CD4-positive, alpha-beta memory T cell (primary cell): ENCODE measurements at regions of chr18 and their contacts with region 1.

Region 1: DNA sequence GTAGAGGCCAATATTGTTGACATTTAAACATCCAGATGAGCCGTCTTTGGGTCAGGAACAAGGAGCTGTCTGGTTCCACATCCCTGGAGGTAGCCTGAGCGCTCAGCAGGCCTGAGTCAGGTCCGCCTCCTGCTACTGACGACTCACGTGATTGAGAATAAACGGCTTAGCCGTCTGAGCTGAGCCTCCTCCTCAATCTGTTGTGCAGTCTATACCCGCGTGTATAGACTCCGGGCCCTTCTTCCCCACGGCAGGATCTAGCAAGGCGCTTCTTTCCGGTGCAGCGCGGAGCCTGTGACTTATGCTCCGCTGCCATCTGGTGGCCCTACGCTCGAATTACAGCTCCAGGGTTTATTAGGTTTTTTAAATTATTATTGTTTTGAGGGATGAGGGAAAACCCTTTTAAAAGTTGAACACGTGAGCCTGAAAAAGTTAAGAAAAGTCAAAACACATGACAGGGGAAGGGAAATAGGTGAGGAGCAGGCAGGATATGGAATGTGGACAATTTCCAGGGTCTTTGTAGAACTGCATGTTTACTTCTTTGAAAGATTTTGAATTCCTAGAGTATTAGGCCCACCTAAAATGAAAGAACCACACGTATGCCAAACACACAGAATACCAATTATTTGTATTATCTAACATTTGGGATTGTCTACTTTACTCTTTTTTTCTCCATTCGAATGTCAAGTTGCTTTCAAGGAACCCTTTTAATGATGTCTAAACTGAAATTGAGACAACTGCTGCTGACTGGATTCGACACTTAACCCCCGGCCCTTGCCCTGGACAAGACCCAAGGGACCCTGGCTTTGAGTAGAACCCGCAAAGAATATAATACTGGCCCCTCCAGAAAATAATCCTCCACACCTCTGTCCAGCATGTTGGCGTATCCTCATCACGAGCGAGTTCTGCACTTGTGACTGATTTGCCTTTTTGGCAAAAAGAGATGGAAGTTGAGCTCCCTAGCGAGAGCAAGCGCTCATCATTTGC is 112.4 kb upstream of the ZNF236 start:
- DNase-seq: peak; percentile 50 to 60 (median 57)
- H3K4me3 ChIP-seq: no peak overlapping the region
- H3K4me3 Mint-ChIP-seq: peak overlapping the region in 2 of 8 donors; percentile 16 to 26
- H3K27ac ChIP-seq: no peak overlapping the region
- H3K27ac Mint-ChIP-seq: peak overlapping the region in 2 of 7 donors; percentile 2 to 13
- H3K4me1 ChIP-seq: peaks cover 3% of the 10 kb centered on the region
- H3K4me1 Mint-ChIP-seq: peaks cover 0 to 6% (median 3%) of the 10 kb centered on the region in 4 donors
- H3K27me3 ChIP-seq: no peaks in the 10 kb centered on the region
- H3K27me3 Mint-ChIP-seq: peaks cover 1 to 2% of the 10 kb centered on the region in 2 donors

Region 2: DNA sequence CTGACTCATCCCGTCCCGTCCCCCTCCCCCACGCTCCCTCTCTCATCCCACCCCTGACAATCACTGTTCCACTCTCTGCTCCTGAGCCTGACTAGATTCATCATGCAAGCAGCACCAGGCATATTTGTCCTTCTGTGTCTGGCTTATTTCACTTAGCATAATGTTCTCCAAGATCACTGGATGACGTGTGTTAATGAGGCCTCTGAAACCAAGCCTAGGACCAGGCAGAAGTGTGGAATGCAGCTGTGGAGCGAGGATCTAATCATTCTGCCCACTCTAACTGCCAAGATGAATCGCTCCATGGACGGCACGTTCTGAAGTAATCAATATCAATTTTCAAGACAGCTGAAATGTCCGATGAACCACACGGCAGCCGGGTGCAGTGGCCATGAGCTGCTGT is 10.0 kb before region 1 on chr18:
- CTCF ChIA-PET with region 1: interaction called, 11 read pairs
- POLR2A ChIA-PET with region 1: no interaction called
- intact Hi-C with region 1: no loop called
- DNase-seq: no peak
- H3K4me3 ChIP-seq: no peak overlapping the region
- H3K4me3 Mint-ChIP-seq: no peak overlapping the region
- H3K27ac ChIP-seq: no peak overlapping the region
- H3K27ac Mint-ChIP-seq: no peak overlapping the region
- H3K4me1 ChIP-seq: no peaks in the 10 kb centered on the region
- H3K4me1 Mint-ChIP-seq: peaks cover 0 to 2% (median 0%) of the 10 kb centered on the region in 4 donors
- H3K27me3 ChIP-seq: peaks cover 7% of the 10 kb centered on the region
- H3K27me3 Mint-ChIP-seq: peaks cover 29 to 35% of the 10 kb centered on the region in 2 donors

Region 3: GRCh38 chr18:76721207-76721996 is 11.4 kb after region 1 on chr18:
- CTCF ChIA-PET with region 1: interaction called, 30 read pairs
- POLR2A ChIA-PET with region 1: interaction called, 3 read pairs
- intact Hi-C with region 1: no loop called
- DNase-seq: peak; percentile 73 to 83 (median 80)
- H3K4me3 ChIP-seq: peak overlapping the region in 1 of 2 donors; percentile 27
- H3K4me3 Mint-ChIP-seq: peak overlapping the region; percentile 43 to 86 (median 76)
- H3K27ac ChIP-seq: no peak overlapping the region
- H3K27ac Mint-ChIP-seq: peak overlapping the region; percentile 67 to 88 (median 82)
- H3K4me1 ChIP-seq: peaks cover 53% of the 10 kb centered on the region
- H3K4me1 Mint-ChIP-seq: peaks cover 33 to 63% (median 48%) of the 10 kb centered on the region in 4 donors
- H3K27me3 ChIP-seq: no peaks in the 10 kb centered on the region
- H3K27me3 Mint-ChIP-seq: no peaks in the 10 kb centered on the region